ENCODE measurements at regions of chr1 and their contacts with region 1.

Region 1: GRCh38 chr1:221230605-221231004 is 351.4 kb downstream of the HLX start:
- DNase-seq: peak; percentile 38
- H3K4me3 Mint-ChIP-seq: no peak overlapping the region
- H3K27ac Mint-ChIP-seq: no peak overlapping the region
- H3K4me1 Mint-ChIP-seq: no peaks in the 10 kb centered on the region
- H3K27me3 Mint-ChIP-seq: no peaks in the 10 kb centered on the region
- CTCF ChIP-seq: no peak

Region 2: DNA sequence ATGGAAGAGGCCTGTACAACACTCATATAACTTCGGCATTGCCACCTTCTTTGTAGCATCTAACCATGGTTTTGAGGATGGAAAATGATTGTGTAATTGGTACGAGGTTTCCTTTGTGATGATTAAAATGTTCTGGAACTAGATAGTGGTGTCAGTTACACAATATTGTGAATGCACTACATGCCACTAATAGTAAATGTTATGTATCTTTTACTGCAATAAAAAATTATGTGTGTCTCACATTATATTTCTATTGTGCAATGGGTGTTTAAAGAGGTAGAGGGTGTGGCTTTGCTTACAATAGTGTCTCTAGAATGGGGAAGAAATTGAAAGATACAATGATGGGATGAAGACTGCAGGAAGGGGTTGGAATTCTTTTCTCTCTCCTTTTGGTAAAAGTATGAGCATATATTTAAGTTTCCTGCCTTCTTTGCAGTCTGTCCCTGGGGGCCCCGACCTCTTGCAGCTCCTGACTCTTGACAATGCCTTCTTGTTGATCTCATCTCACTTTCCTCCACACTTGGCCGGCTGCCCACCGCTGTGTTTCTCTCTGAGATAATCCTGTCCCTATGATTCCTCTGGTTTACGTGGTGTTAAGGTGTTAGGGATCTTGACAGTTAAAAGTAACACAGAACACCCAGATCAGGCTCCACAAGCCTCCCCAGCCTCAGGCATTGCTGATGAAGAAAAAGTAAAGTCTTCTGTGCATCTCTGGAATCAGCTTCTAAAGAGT is 404.6 kb before region 1 on chr1:
- CTCF ChIA-PET with region 1: interaction called, 11 read pairs
- POLR2A ChIA-PET with region 1: no interaction called
- intact Hi-C with region 1: no loop called
- DNase-seq: peak; percentile 60
- H3K4me3 Mint-ChIP-seq: no peak overlapping the region
- H3K27ac Mint-ChIP-seq: no peak overlapping the region
- H3K4me1 Mint-ChIP-seq: peaks cover 10% of the 10 kb centered on the region
- H3K27me3 Mint-ChIP-seq: peaks cover 17% of the 10 kb centered on the region
- CTCF ChIP-seq: no peak

Region 3: DNA sequence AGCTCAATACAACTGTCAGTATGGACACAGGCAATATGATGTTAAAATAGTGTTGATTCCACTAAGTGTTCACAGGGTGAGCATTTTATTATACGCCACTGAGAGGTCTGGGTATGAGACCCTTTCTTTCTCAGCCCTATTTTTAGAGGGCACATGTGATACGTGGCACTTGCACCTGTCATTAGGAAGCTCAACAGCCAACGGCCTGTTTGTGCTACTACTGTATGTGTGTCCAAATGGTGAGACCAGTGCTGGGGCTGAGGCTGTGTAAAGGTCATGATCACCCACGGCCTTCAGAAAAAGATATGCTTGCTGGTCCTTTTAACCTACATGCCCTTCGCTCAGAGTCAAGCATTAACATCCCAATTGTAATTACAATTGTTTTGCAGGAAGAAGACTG is 335.1 kb after region 1 on chr1:
- CTCF ChIA-PET with region 1: no interaction called
- POLR2A ChIA-PET with region 1: no interaction called
- intact Hi-C with region 1: no loop called
- DNase-seq: no peak
- H3K4me3 Mint-ChIP-seq: no peak overlapping the region
- H3K27ac Mint-ChIP-seq: no peak overlapping the region
- H3K4me1 Mint-ChIP-seq: no peaks in the 10 kb centered on the region
- H3K27me3 Mint-ChIP-seq: no peaks in the 10 kb centered on the region
- CTCF ChIP-seq: no peak